ENCODE measurements at regions of chr2 and their contacts with region 1.

Region 1: DNA sequence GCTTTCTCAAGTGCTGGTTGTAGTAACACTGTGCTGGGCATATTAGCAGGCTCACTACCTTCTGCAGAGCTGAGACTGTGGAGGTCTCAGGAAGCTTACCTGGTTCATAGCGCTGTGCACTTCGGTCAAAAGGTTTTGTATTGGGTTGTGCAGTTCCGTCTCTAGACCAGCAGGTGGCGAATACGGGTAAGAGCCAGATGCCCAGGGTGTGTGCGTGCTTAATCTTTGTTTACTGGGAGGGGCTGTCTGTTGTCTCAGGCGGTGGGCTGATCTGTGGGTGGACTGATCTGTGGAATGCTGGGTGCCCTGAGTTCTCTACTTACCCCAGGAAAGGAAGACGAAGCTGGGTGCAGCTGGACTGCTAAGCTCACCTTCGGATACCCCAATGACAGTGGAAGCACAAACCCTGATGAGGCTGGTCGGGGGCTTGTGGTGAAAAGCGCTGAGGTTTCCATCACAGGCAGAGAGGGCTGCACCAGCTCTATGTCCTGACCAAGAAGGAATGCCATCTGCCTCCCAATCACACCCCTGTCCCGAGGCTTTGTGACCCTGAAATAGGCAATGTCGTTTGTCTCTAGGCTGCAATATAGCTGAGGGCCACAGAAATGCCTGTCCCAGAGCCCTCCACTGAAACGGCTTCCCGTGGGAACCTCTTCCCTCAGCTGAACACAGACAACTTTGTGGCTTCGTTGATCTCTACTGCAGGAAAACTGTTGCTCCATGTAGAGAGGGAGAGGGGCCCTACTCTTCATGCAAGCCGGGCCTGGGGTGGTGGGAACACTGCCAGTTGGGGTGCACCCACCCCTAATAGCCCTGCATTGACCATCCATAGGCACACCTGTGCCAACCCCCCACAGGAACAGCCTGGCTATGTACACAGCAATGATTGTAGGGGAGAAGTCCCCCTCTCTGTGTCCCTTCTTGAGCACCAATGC is 45.9 kb upstream of the FAM117B start:
- DNase-seq: peak; percentile 68
- H3K4me3 ChIP-seq: no peak overlapping the region
- H3K27ac ChIP-seq: no peak overlapping the region
- H3K4me1 ChIP-seq: no peaks in the 10 kb centered on the region
- H3K27me3 ChIP-seq: no peaks in the 10 kb centered on the region
- CTCF ChIP-seq: peak; percentile 85 to 90
- POLR2A ChIP-seq: no peak

Region 2: DNA sequence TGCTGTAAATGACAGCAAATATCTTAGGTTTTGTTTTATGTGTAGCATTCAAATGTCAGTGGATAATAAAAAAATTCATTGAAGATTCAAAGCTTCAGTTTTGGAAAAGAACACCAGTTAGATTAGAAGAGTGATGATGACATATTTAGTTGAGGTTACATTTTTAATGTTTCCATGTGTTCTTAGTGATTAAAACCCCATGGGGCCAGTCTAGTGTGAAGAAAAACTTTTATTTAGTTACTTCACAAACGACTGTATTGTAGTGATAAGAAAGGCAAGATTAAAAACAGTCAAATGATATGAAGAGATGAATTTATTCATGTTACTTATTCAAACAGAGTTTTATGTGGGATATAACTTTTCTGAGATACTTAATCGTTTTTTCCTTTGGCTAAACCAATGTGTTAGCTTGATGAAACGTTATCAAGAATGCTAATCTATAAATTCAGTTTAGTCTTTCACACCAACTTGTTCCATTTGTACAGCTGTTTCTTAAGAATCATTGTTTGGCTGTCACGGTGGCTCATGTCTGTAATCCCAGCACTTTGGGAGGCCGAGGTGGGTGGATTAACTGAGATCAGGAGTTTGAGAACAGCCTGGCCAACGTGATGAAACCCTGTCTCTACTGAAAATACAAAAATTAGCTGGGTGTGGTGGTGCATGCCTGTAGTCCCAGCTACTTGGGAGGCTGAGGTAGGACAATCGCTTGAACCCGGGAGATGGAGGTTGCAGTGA is 201.1 kb before region 1 on chr2:
- CTCF ChIA-PET with region 1: no interaction called
- POLR2A ChIA-PET with region 1: no interaction called
- dilution Hi-C with region 1: no loop called
- intact Hi-C with region 1: no loop called
- DNase-seq: no peak
- H3K4me3 ChIP-seq: no peak overlapping the region
- H3K27ac ChIP-seq: no peak overlapping the region
- H3K4me1 ChIP-seq: peaks cover 18% of the 10 kb centered on the region
- H3K27me3 ChIP-seq: no peaks in the 10 kb centered on the region
- CTCF ChIP-seq: no peak
- POLR2A ChIP-seq: no peak

Region 3: DNA sequence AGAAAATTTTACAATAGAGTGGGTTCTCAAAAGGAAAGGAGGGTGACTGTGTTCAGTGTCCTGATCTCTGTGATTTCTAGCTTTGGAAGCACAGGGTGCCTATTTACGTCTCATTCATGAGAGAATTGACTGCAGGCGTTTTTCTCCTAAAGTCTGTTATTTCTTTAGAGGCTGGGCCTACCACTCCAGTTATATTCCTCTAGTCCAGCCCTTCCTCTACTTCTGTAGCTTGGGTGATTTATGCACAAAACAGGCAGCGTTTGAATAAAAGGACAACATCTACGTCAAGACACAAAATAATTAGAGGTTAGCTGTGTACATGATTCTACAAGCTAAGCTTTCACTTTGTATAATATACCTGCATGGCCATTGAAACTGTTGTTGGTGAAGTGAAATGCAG is 13.4 kb after region 1 on chr2:
- CTCF ChIA-PET with region 1: interaction called, 10 read pairs
- POLR2A ChIA-PET with region 1: no interaction called
- dilution Hi-C with region 1: no loop called
- intact Hi-C with region 1: no loop called
- DNase-seq: no peak
- H3K4me3 ChIP-seq: no peak overlapping the region
- H3K27ac ChIP-seq: no peak overlapping the region
- H3K4me1 ChIP-seq: no peaks in the 10 kb centered on the region
- H3K27me3 ChIP-seq: no peaks in the 10 kb centered on the region
- CTCF ChIP-seq: no peak
- POLR2A ChIP-seq: no peak

Region 4: GRCh38 chr2:202634556-202635427 is 45.9 kb after region 1 on chr2 and contains the start of gene FAM117B:
- CTCF ChIA-PET with region 1: interaction called, 16 read pairs
- POLR2A ChIA-PET with region 1: no interaction called
- dilution Hi-C with region 1: no loop called
- intact Hi-C with region 1: loop called (anchors 1 kb)
- DNase-seq: peak; percentile 96
- H3K4me3 ChIP-seq: peak within 1 kb of the TSS; percentile 65 to 85 (median 70)
- H3K27ac ChIP-seq: peak within 1 kb of the TSS; percentile 34
- H3K4me1 ChIP-seq: peaks cover 17% of the 10 kb centered on the region
- H3K27me3 ChIP-seq: no peaks in the 10 kb centered on the region
- CTCF ChIP-seq: peak in 1 of 2 donors; percentile 6
- POLR2A ChIP-seq: no peak
- total RNA-seq, gene FAM117B: 5.7 and 7.0 TPM in 2 replicates